ENCODE measurements at regions of chr2 and their contacts with region 1.

Region 1: DNA sequence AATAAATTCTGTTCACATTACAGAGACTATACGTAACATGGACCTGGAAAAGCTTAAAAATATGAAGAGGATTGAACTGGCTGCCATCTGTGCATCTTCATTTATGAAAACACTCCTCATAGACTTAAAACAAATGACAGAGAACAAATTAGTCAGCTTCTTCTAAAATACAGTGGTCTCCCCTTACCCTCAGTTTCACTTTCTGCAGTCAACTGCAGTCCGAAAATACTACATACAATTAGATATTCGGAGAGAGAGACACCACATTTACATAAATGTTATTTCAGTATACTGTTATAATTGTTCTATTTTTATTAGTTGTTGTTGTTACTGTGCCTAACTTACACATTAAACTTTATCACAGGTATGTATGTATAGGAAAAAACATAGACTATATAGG is 6.5 kb downstream of the RNF103 start:
- DNase-seq: no peak
- H3K4me3 ChIP-seq: no peak overlapping the region
- CTCF ChIP-seq: no peak

Region 2: GRCh38 chr2:86440631-86441391 is 176.3 kb before region 1 on chr2 and contains the start of gene KDM3A:
- in situ Hi-C with region 1: no loop called
- DNase-seq: peak; percentile 99
- H3K4me3 ChIP-seq: peak within 1 kb of the TSS; percentile 80
- CTCF ChIP-seq: no peak

Region 3: DNA sequence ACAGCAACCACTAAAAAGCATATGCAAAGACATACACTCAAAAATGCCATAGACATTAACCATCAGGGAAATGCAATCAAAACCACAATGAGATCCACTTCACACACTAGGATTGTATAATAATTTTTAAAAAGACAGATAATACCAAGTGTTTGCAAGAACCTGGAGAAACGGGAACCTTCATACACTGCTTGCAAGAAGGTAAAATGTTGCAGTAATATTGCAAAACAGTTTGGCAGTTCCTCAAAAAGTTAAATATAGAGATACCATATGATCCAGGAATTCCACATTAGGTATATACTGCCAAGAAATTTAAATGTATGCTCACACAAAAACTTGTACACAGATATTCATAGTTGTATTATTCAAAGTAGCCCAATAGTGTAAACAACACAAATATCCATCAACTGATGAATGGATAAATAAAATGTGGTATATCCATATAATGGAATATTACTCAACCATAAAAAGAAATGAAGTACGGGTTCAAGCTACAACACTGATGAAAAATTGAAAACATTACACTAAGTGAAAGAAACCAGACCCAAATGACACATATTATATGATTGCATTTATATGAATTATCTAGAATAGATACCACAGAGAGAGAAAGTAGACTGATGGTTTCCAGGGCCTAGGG is 39.2 kb before region 1 on chr2:
- in situ Hi-C with region 1: no loop called
- DNase-seq: no peak
- H3K4me3 ChIP-seq: no peak overlapping the region
- CTCF ChIP-seq: no peak

Region 4: DNA sequence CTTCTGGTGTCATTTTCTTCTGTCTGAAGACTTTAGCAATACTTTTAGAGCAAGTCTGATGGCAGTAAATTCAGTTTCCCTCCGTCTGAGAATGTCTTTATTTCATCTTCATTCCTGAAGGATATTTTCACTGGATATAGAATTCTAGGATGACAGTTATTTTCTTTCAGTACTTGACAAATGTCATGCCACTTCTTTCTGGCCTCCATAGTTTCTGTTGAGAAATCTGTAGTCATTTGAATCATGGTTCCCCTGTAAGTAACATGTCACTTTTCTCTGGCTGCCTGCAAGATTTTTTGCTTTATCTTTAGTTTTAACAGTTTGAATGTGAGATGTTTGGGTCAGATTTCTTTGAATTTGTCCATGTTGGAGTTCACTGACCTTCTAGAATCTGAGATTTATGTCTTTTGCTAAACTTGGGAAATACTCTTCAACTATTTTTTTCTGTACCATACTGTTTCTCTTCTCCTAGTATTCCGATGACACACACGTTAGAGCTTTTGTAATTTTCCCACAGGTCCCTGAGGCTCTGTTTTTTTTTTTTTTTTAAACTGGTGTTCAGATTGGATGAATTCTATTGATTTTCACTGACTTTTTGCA is 133.2 kb after region 1 on chr2:
- in situ Hi-C with region 1: loop called (anchors 10 kb)
- DNase-seq: no peak
- H3K4me3 ChIP-seq: no peak overlapping the region
- CTCF ChIP-seq: no peak

Measured in astrocyte of the cerebellum (primary cell).